Activated T-helper 2 cell treated with anti-CD3 and anti-CD28 coated beads, Interferon-gamma antibody, Interleukin-2, Interleukin-4, amounts not matched to agents 10 μg/mL and 5 μg/mL and 100 μg/mL, durations not matched to agents 14 hours and 24 hours and 36 hours (primary cell): ENCODE measurements at regions of chr12 and their contacts with region 1.

Region 1: DNA sequence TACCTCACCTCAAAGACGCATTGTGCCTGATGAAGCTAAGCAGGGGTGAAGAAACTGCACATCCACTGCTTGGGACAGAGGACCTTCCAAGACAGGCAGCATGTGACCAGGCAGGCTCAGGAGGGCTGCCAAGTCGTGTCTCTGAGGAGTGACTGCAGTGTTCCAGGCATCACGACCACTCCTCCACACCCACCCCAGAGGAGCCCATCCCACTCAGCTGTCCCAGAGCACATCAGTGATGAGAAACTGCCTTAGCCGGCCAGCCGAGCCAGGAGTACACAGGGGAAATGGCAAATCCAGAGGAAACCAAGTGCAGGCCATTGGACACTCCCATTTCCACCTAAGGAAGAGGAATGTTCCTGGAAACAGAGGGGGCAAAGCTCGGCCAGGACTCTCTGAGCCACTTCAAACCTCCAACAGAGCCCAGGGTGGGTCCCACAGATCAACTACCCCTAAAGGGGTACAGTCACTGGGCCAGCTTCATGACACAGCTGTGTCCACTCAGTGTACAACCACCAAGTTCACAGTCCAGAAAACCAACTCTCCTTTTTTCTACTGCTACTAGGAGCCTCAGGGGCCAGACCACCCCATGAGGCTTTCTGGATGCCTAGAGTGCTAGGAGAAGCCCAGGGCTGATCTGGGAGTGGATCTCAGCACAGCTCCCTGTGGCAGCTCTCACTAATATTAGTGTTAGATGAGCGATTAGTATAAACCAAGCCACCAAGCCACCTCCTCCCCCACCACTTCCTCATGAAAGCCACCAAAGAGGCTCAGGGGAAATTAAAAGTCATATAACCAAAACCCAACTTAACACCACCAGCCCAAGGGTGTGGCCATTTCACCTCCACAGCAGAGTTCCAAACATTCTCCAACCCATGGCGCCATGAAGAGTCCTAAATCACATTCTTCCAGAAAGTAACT is 15.4 kb downstream of the PXN start:
- DNase-seq: peak; percentile 37
- H3K4me3 Mint-ChIP-seq: peak overlapping the region; percentile 65
- H3K27ac Mint-ChIP-seq: peak overlapping the region; percentile 30
- H3K4me1 Mint-ChIP-seq: peaks cover 65% of the 10 kb centered on the region
- H3K27me3 Mint-ChIP-seq: no peaks in the 10 kb centered on the region

Region 2: DNA sequence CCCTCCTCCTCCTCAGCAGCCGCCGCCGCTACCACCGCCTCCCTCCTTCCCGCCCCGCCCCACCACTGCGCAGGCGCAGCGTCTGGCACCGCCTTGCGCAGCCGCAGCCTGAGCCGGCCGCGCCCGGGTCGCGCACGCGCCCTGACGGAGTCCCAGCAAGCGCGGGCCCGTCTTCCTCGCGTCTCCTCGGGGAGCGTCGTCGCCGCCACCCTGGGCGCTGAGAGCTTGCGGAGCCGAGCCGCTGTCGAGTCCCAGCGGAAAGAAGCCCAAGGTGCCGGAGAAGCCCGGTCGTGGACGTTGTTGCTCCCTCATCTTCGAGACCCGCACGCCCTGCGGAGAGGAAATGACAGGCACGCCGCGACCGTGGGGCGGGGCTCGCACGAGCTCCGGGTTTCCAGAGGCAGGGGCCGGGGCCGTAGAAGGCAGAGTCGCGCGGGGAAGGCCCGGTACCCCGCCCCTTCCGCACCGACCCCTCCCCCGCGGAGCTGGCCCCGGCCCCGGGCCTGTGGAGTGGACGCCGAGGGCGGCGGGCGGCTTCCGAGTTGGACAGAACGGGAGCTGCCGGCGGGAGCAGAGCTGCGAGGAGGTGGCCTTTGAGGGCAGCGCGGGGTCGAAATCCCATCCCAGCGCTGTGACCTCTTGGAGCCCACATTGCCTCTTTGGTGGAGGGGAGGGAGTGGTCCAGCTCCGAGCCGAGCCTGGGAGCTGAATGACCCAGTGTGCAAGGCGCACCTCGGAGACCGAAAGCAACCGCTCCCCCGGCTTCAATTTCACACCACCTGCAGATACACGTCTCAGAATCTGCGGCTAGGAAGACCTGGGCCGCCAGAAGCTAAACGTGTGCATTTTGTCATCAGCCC is 133.1 kb before region 1 on chr12:
- intact Hi-C with region 1: loop called (anchors 5 kb)
- DNase-seq: peak; percentile 97
- H3K4me3 Mint-ChIP-seq: peak overlapping the region; percentile 86
- H3K27ac Mint-ChIP-seq: peak overlapping the region; percentile 83
- H3K4me1 Mint-ChIP-seq: peaks cover 67% of the 10 kb centered on the region
- H3K27me3 Mint-ChIP-seq: no peaks in the 10 kb centered on the region

Region 3: GRCh38 chr12:120228291-120229070 is 21.7 kb before region 1 on chr12:
- intact Hi-C with region 1: loop called (anchors 1 kb)
- DNase-seq: peak; percentile 79
- H3K4me3 Mint-ChIP-seq: peak overlapping the region; percentile 24
- H3K27ac Mint-ChIP-seq: peak overlapping the region; percentile 71
- H3K4me1 Mint-ChIP-seq: peaks cover 65% of the 10 kb centered on the region
- H3K27me3 Mint-ChIP-seq: no peaks in the 10 kb centered on the region

Region 4: DNA sequence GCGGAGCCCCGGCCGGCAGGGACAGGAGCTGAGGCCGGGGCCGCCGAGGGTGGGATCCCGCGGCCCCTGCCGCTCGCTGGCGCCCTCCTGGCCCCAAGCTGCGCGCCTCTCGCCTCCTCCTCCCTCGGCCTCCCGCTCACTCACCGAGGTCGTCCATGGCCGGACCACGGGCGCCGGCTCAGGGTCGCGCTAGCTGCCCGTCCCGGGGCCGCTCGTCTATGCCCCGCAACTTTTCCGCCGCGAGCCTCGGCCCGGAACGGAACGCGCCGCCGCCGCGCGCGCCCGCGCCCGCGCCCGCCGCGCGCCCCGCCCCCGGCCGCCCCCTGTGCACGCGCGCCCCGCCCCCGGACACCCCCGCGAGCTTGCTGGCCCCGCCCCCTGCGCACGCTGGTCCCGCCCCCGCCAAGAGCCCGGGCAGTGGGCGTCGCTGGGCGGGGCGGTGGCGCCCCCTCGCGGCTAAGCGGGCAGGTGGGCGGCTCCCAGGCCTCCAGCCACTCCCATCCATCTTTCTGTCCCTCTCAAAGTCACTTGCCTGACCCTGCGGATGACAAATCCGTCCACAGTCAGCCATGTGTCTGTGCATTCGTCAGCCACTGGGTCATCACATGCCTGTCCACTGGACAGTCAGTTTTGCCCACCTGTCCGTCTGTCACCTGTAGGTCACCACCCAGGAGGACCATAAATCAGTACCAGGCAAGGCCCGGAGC is 15.5 kb after region 1 on chr12 and contains the start of gene PXN:
- intact Hi-C with region 1: loop called (anchors 1 kb)
- DNase-seq: peak; percentile 85
- H3K4me3 Mint-ChIP-seq: peak within 1 kb of the TSS; percentile 90
- H3K27ac Mint-ChIP-seq: peak within 1 kb of the TSS; percentile 85
- H3K4me1 Mint-ChIP-seq: peaks cover 43% of the 10 kb centered on the region
- H3K27me3 Mint-ChIP-seq: no peaks in the 10 kb centered on the region
- total RNA-seq, gene PXN: 44.4 and 45.4 TPM in 2 replicates